ENCODE measurements at regions of chr11 and their contacts with region 1.

Region 1: DNA sequence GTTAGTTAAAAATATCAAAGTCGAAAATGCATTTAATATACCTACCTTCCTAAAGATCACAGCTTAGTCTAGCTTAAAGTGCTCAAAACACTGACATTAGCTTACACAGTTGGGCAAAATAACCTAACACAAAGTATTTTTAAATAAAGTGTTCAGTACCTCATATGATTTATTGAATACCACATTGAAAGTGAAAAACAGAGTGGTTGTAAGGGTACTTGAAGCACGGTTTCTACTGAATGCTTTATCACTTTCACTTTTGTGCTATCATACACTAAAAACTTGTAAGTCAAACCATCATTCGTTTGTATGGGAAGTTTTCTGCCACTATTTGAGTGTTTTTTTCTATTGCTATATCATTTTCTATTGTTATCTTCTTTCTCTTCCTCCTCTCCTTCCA is 36.6 kb downstream of the ZBTB44 start:
- DNase-seq: no peak
- ATAC-seq: no peak
- H3K4me3 ChIP-seq: no peak overlapping the region
- H3K27ac ChIP-seq: no peak overlapping the region
- H3K4me1 ChIP-seq: no peaks in the 10 kb centered on the region
- H3K27me3 ChIP-seq: no peaks in the 10 kb centered on the region
- CTCF ChIP-seq: no peak

Region 2: DNA sequence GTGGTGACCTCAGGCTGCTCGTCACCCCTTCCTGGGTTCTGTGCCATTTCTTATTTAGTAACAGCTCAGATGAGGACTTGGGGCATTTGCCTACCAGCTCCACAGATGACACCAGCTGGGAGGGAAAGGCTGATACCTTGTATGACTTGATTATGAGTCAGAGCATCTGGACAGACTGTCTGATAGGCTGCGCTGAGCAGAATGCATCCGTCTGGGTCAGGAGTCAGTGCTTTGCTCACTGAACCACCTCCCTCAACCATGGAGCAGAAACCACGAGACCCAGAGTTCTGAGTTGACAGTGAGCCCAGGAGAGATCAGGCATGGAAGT is 111.7 kb before region 1 on chr11:
- CTCF ChIA-PET with region 1: no interaction called
- POLR2A ChIA-PET with region 1: no interaction called
- intact Hi-C with region 1: no loop called
- DNase-seq: peak; percentile 99
- ATAC-seq: peak; percentile 96
- H3K4me3 ChIP-seq: no peak overlapping the region; the same call in 1 of the 2 replicates
- H3K27ac ChIP-seq: peak overlapping the region; percentile 83
- H3K4me1 ChIP-seq: peaks cover 68% of the 10 kb centered on the region
- H3K27me3 ChIP-seq: no peaks in the 10 kb centered on the region
- CTCF ChIP-seq: no peak

Region 3: GRCh38 chr11:130295657-130296056 is 17.5 kb after region 1 on chr11:
- CTCF ChIA-PET with region 1: no interaction called
- POLR2A ChIA-PET with region 1: no interaction called
- intact Hi-C with region 1: loop called (anchors 2 kb)
- DNase-seq: no peak
- ATAC-seq: no peak
- H3K4me3 ChIP-seq: no peak overlapping the region
- H3K27ac ChIP-seq: no peak overlapping the region
- H3K4me1 ChIP-seq: no peaks in the 10 kb centered on the region
- H3K27me3 ChIP-seq: no peaks in the 10 kb centered on the region
- CTCF ChIP-seq: no peak

Measured in PC-3 (cell line).